Heart right ventricle (tissue), 16 donors: ENCODE measurements at regions of chr15 and their contacts with region 1.

Region 1: DNA sequence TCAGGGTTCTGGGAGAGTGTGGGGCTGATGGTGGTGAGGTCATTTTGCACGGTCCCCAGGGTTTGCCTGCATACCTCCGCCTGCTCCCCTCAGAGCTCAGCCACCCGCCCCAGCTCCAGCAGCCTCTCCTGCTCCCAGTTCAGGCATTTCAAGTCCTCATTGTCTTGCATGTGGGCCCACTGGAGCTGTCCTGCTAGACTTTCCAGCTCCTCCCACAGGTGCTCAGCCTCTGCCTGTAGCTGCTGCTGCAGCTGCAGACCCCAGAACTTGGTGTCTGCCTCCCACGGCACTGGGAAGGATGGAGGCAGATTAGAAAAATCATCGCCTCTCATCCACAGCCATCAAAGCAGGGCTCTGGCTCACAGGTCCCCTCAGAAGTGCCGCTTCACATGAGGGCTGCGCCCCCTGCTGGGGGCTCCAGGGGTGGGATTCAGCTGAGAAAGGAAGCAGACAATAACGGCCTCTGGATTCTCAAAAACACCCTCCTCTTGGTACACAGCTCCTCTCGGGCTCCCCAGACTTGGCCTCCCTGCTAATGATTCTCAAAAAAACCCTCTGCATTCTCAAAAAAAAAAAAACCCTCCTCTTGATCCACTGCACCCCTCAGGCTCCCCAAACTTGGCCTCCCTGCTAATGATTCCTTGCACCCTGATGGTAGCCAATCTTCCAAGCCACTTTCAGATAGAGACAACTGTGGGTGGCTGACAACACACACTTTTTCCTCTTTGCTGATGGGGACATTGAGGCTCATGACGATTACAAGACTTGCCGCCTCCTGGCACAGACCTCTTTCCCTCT is 89.3 kb upstream of the C2CD4B start:
- DNase-seq: peak; percentile 75 to 76
- ATAC-seq: peak; percentile 65 to 91 (median 77)
- H3K4me3 ChIP-seq: no peak overlapping the region
- H3K27ac ChIP-seq: no peak overlapping the region
- H3K4me1 ChIP-seq: peaks cover 0 to 6% (median 0%) of the 10 kb centered on the region in 9 donors
- H3K27me3 ChIP-seq: no peaks in the 10 kb centered on the region
- CTCF ChIP-seq: peak; percentile 60 to 81 (median 77)

Region 2: GRCh38 chr15:62060113-62060895 is 194.0 kb before region 1 on chr15 and contains the start of gene VPS13C:
- intact Hi-C with region 1: loop called in 1 of 10 experiments (anchors 10 kb)
- DNase-seq: peak; percentile 93
- ATAC-seq: peak; percentile 99 to 100 (median 99)
- H3K4me3 ChIP-seq: peak within 1 kb of the TSS; percentile 62 to 98 (median 89)
- H3K27ac ChIP-seq: peak within 1 kb of the TSS; percentile 66 to 96 (median 93)
- H3K4me1 ChIP-seq: peaks cover 0 to 38% (median 20%) of the 10 kb centered on the region in 9 donors
- H3K27me3 ChIP-seq: peaks cover 0 to 5% (median 0%) of the 10 kb centered on the region in 7 donors
- CTCF ChIP-seq: peak; percentile 58 to 88 (median 83)
- total RNA-seq, gene VPS13C: 28.5 to 59.0 (median 43.4) TPM

Region 3: DNA sequence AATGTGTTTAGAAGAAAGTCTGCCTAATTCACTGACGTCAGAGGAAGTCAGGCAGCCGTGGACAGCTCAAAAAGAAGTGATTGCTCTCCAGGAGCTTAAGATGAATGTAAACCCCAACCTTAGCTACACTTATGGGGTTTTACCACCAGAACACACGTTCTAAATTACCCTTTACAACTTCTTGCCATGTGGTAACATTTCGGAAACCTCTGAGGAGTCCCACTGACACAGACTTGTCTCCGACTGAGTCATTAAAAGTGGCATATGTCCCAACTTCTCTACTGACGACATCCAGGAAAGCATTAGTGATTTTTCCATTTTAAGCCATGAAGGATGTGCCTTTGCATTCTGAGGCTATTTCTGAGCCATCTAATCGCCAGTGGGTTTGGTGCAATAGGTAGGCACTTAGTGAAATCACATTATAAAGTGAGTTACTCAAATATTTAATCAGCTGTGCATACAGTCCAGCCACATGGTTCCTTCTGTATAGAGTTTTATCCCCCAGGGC is 155.2 kb before region 1 on chr15:
- intact Hi-C with region 1: loop called in 1 of 10 experiments (anchors 10 kb)
- DNase-seq: no peak
- ATAC-seq: peak in 6 of 8 donors; percentile 18 to 85 (median 54)
- H3K4me3 ChIP-seq: no peak overlapping the region
- H3K27ac ChIP-seq: peak overlapping the region in 2 of 10 donors; percentile 6 to 22
- H3K4me1 ChIP-seq: peaks cover 0 to 4% (median 0%) of the 10 kb centered on the region in 9 donors
- H3K27me3 ChIP-seq: peaks cover 0 to 11% (median 0%) of the 10 kb centered on the region in 7 donors
- CTCF ChIP-seq: no peak

Region 4: DNA sequence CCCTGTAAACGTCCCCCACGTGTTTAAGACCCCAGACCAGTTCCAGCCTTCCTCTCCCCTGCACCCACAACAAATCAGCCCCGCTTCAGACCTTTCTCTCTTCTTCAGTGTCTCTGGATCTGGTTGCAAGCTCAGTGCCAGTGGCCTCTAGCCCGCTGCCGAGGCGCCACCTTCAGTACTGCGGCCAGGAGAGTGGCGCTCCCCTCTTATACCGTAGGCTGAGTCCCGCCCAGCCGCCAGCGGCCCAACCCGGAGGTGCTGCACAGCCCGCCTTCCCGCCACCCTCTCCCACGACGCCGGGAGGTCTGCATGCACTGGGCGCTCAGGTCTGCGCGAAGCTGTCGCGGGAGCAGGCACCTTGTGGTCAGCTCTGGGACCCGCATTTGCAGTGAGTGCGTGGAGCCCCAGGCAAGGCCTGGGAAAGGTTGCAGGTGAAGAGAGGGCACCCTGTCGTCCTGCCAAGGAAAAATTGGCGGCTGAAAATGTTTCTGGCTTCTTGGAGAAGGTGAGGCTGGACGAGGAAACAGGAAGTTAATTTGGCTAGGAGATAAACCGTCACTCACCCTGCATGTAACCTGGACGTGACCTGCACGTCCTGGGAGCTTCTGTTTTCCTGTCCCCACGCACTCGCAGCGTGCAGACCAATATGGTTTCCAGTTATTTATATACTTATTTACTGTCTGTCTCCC is 89.1 kb before region 1 on chr15 and contains the start of gene C2CD4B:
- intact Hi-C with region 1: loop called in 2 of 10 experiments (anchors 10 kb)
- DNase-seq: peak; percentile 78 to 82
- ATAC-seq: peak; percentile 89 to 98 (median 96)
- H3K4me3 ChIP-seq: peak within 1 kb of the TSS; percentile 26 to 64 (median 58)
- H3K27ac ChIP-seq: peak within 1 kb of the TSS; percentile 49 to 87 (median 81)
- H3K4me1 ChIP-seq: peaks cover 0 to 29% (median 19%) of the 10 kb centered on the region in 9 donors
- H3K27me3 ChIP-seq: peaks cover 0 to 81% (median 41%) of the 10 kb centered on the region in 7 donors
- CTCF ChIP-seq: no peak
- total RNA-seq, gene C2CD4B: 0.82 to 7.1 (median 2.7) TPM

Region 5: DNA sequence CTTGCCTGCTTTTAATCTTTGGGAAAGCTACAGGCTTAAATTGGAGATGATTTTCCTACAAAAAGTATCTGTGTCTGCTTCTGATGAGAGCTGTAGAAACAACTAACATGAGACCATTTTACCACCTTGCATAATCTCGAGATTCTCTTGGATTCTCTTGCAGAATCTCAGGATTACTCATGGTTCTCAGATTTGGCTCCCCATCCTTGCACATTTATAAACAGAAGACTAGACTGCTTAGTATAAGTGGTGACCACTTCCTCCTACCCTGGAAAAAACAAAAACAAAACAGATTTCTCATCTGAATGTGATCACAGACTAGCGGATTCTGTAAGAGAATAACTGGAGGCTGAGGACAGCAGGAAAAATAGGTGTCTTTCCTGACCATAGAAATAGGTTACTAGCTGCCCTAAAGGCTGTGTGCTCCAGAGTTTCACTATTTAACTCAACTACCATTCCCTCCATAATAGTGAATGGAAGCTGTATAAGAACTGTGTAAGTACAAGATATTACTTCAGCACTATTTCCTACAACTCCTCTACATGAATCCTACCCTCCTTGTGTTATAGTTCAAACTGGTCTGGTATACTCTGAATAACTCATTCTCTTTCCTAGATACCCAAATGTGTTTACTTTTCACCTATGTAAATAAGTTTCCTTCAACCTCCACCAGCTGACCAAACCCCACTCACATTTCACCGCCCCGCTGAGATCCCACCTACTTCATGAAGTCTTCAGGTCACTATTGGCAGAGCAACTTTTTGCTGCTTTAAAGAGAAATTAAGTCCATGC is 32.9 kb after region 1 on chr15:
- intact Hi-C with region 1: no loop called
- DNase-seq: no peak
- ATAC-seq: no peak
- H3K4me3 ChIP-seq: no peak overlapping the region
- H3K27ac ChIP-seq: no peak overlapping the region
- H3K4me1 ChIP-seq: no peaks in the 10 kb centered on the region
- H3K27me3 ChIP-seq: peaks cover 0 to 37% (median 18%) of the 10 kb centered on the region in 7 donors
- CTCF ChIP-seq: no peak

Region 6: DNA sequence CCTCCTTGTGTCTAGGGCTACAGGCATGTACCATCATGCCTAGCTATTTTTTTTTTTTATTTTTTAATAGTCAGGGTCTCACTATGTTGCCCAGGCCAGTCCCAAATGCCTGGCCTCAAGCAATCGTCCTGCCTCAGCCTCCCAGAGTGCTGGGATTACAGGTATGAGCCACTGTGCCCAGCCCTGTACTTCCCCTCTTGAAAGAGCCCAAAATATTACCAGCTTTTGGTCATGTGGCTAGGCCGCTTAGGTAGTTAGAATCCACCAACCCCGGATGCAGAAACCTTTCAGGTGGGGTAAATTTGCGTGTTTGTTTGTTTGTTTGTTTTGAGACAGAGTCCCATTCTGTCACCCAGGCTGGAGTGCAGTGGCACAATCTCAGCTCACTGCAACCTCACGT is 43.6 kb after region 1 on chr15:
- intact Hi-C with region 1: no loop called
- DNase-seq: no peak
- ATAC-seq: no peak
- H3K4me3 ChIP-seq: no peak overlapping the region
- H3K27ac ChIP-seq: no peak overlapping the region
- H3K4me1 ChIP-seq: peaks cover 0 to 10% (median 0%) of the 10 kb centered on the region in 9 donors
- H3K27me3 ChIP-seq: peaks cover 0 to 5% (median 0%) of the 10 kb centered on the region in 7 donors
- CTCF ChIP-seq: no peak

Region 7: GRCh38 chr15:62403164-62403809 is 149.0 kb after region 1 on chr15:
- intact Hi-C with region 1: no loop called
- DNase-seq: no peak
- ATAC-seq: peak in 7 of 8 donors; percentile 51 to 87 (median 68)
- H3K4me3 ChIP-seq: no peak overlapping the region
- H3K27ac ChIP-seq: peak overlapping the region in 4 of 10 donors; percentile 9 to 67 (median 45)
- H3K4me1 ChIP-seq: peaks cover 3 to 56% (median 32%) of the 10 kb centered on the region in 9 donors
- H3K27me3 ChIP-seq: no peaks in the 10 kb centered on the region
- CTCF ChIP-seq: no peak